Activated CD4-positive, alpha-beta T cell treated with anti-CD3 and anti-CD28 coated beads for 36 hours (primary cell): ENCODE measurements at regions of chr1 and their contacts with region 1.

Region 1: GRCh38 chr1:206684478-206685333 is at the start of gene MAPKAPK2:
- DNase-seq: peak; percentile 88
- ATAC-seq: peak; percentile 70
- H3K4me3 Mint-ChIP-seq: peak within 1 kb of the TSS; percentile 98
- H3K27ac Mint-ChIP-seq: peak within 1 kb of the TSS; percentile 94
- H3K4me1 Mint-ChIP-seq: peaks cover 66% of the 10 kb centered on the region
- H3K27me3 Mint-ChIP-seq: peaks cover 2% of the 10 kb centered on the region
- total RNA-seq, gene MAPKAPK2: 62.8 to 64.7 TPM

Region 2: GRCh38 chr1:206612129-206612876 is 72.4 kb before region 1 on chr1 and contains the start of gene EIF2D:
- CTCF ChIA-PET with region 1: interaction called, 5 read pairs
- POLR2A ChIA-PET with region 1: interaction called, 3 read pairs
- intact Hi-C with region 1: loop called (anchors 1 to 2 kb)
- DNase-seq: peak; percentile 98
- ATAC-seq: peak; percentile 87
- H3K4me3 Mint-ChIP-seq: peak within 1 kb of the TSS; percentile 92
- H3K27ac Mint-ChIP-seq: peak within 1 kb of the TSS; percentile 94
- H3K4me1 Mint-ChIP-seq: peaks cover 40% of the 10 kb centered on the region
- H3K27me3 Mint-ChIP-seq: no peaks in the 10 kb centered on the region
- total RNA-seq, gene EIF2D: 91.2 to 100 TPM

Region 3: GRCh38 chr1:206635080-206635977 is 49.4 kb before region 1 on chr1 and contains the start of gene DYRK3:
- CTCF ChIA-PET with region 1: interaction called, 5 read pairs
- POLR2A ChIA-PET with region 1: interaction called, 4 read pairs
- intact Hi-C with region 1: loop called (anchors 1 to 2 kb)
- DNase-seq: peak; percentile 97
- ATAC-seq: peak; percentile 93
- H3K4me3 Mint-ChIP-seq: peak within 1 kb of the TSS; percentile 76
- H3K27ac Mint-ChIP-seq: peak within 1 kb of the TSS; percentile 87
- H3K4me1 Mint-ChIP-seq: peaks cover 27% of the 10 kb centered on the region
- H3K27me3 Mint-ChIP-seq: peaks cover 7% of the 10 kb centered on the region
- total RNA-seq, gene DYRK3: 8.3 to 8.7 TPM

Region 4: DNA sequence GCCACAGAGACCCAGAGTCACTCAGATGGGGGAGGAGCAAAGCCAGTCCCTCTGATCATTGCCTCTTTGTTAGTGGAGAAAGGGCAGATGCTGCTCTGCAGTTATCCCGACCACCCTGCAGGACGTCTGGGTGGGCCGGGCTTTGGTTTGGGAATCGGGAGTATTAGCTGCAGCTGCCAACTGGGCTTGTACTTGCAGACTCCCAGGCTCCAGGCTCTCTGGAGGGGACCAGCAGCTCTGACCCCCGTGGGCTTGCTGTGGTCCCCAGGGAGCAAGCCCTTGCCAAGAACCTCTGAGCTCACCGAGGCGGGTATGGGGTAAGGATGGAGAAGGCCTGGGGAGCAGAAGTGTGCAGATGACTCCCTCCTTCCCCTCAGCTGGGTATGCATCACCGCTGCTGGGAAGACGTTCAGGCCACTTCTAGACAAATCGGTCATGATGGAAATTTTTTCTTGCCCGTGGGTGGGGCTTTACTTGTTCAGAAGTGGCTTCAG is 21.6 kb after region 1 on chr1:
- CTCF ChIA-PET with region 1: interaction called, 13 read pairs
- POLR2A ChIA-PET with region 1: interaction called, 6 read pairs
- intact Hi-C with region 1: loop called (anchors 1 kb)
- DNase-seq: peak; percentile 88
- ATAC-seq: peak; percentile 74
- H3K4me3 Mint-ChIP-seq: no peak overlapping the region
- H3K27ac Mint-ChIP-seq: peak overlapping the region; percentile 63
- H3K4me1 Mint-ChIP-seq: peaks cover 86% of the 10 kb centered on the region
- H3K27me3 Mint-ChIP-seq: no peaks in the 10 kb centered on the region

Region 5: GRCh38 chr1:206766251-206766856 is 81.6 kb after region 1 on chr1:
- CTCF ChIA-PET with region 1: interaction called, 4 read pairs
- POLR2A ChIA-PET with region 1: no interaction called
- intact Hi-C with region 1: loop called in 1 of 2 experiments (anchors 5 kb)
- DNase-seq: peak; percentile 82
- ATAC-seq: peak; percentile 64
- H3K4me3 Mint-ChIP-seq: peak overlapping the region; percentile 29
- H3K27ac Mint-ChIP-seq: peak overlapping the region; percentile 44
- H3K4me1 Mint-ChIP-seq: peaks cover 63% of the 10 kb centered on the region
- H3K27me3 Mint-ChIP-seq: peaks cover 10% of the 10 kb centered on the region

Region 6: GRCh38 chr1:206865013-206865671 is 180.4 kb after region 1 on chr1 and contains the start of gene IL20:
- CTCF ChIA-PET with region 1: no interaction called
- POLR2A ChIA-PET with region 1: no interaction called
- intact Hi-C with region 1: no loop called
- DNase-seq: peak; percentile 95
- ATAC-seq: peak; percentile 96
- H3K4me3 Mint-ChIP-seq: no peak within 1 kb of the TSS
- H3K27ac Mint-ChIP-seq: no peak within 1 kb of the TSS
- H3K4me1 Mint-ChIP-seq: peaks cover 18% of the 10 kb centered on the region
- H3K27me3 Mint-ChIP-seq: peaks cover 8% of the 10 kb centered on the region
- total RNA-seq, gene IL20: not detected